ENCODE measurements at regions of chr17 and their contacts with region 1.

Region 1: DNA sequence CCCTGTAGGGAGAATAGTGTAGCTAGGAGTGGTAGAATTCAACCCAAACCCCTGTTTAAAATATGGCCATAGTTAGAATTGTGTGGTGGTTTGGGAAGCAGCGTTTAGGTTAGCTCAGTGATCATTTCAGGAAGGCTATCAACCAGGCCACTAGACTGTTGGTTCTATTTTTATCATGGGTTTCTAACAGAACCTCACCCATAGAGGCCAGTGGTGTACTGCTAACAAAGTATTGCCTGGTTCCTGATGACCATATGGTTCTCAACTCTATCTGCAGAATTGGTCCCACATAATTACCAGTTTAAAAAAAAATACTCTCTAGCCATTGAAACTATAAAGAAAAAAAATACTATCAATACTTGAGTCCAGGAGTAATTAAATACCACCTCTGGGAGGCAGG is 70.5 kb upstream of the RASL10B start:
- DNase-seq: peak in 1 of 2 donors; percentile 8
- ATAC-seq: peak in 7 of 8 donors; percentile 56 to 91 (median 88)
- H3K4me3 ChIP-seq: no peak overlapping the region
- H3K27ac ChIP-seq: no peak overlapping the region
- H3K4me1 ChIP-seq: peaks cover 0 to 5% (median 0%) of the 10 kb centered on the region in 9 donors
- H3K27me3 ChIP-seq: no peaks in the 10 kb centered on the region
- CTCF ChIP-seq: peak in 7 of 9 donors; percentile 19 to 53 (median 49)

Region 2: GRCh38 chr17:35596530-35597233 is 64.2 kb before region 1 on chr17:
- intact Hi-C with region 1: no loop called
- DNase-seq: no peak
- ATAC-seq: peak in 2 of 8 donors; percentile 42 to 71
- H3K4me3 ChIP-seq: no peak overlapping the region
- H3K27ac ChIP-seq: no peak overlapping the region
- H3K4me1 ChIP-seq: peaks cover 0 to 25% (median 7%) of the 10 kb centered on the region in 9 donors
- H3K27me3 ChIP-seq: no peaks in the 10 kb centered on the region
- CTCF ChIP-seq: peak in 1 of 9 donors; percentile 16

Region 3: DNA sequence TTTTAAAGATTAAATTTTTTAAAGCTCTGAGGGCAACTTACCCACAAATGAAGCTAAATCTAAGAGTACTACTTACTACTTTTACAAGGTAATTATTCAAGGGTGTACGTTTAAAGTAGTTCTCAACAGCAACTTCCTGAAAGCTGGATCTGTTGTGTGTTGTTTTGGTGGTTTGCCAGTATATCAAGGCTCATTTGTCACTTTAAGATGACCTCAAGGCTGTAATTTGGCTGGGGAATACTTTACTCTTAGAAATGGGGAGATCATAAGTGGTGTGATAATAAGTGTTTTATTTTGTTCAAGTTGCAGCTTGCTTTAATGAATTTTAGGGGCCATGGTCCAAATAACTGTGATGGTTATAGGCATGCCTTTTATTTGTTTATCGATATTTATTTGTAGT is 43.4 kb before region 1 on chr17:
- intact Hi-C with region 1: no loop called
- DNase-seq: no peak
- ATAC-seq: peak in 3 of 8 donors; percentile 17 to 48 (median 46)
- H3K4me3 ChIP-seq: no peak overlapping the region
- H3K27ac ChIP-seq: peak overlapping the region in 6 of 10 donors; percentile 6 to 62 (median 42)
- H3K4me1 ChIP-seq: peaks cover 0 to 41% (median 24%) of the 10 kb centered on the region in 9 donors
- H3K27me3 ChIP-seq: no peaks in the 10 kb centered on the region
- CTCF ChIP-seq: no peak

Region 4: GRCh38 chr17:35713069-35713728 is 52.3 kb after region 1 on chr17:
- intact Hi-C with region 1: no loop called
- DNase-seq: peak in 1 of 2 donors; percentile 51
- ATAC-seq: peak; percentile 89 to 95 (median 92)
- H3K4me3 ChIP-seq: peak overlapping the region in 2 of 10 donors; percentile 4 to 9
- H3K27ac ChIP-seq: peak overlapping the region; percentile 63 to 92 (median 79)
- H3K4me1 ChIP-seq: peaks cover 11 to 77% (median 52%) of the 10 kb centered on the region in 9 donors
- H3K27me3 ChIP-seq: no peaks in the 10 kb centered on the region
- CTCF ChIP-seq: no peak

Region 5: DNA sequence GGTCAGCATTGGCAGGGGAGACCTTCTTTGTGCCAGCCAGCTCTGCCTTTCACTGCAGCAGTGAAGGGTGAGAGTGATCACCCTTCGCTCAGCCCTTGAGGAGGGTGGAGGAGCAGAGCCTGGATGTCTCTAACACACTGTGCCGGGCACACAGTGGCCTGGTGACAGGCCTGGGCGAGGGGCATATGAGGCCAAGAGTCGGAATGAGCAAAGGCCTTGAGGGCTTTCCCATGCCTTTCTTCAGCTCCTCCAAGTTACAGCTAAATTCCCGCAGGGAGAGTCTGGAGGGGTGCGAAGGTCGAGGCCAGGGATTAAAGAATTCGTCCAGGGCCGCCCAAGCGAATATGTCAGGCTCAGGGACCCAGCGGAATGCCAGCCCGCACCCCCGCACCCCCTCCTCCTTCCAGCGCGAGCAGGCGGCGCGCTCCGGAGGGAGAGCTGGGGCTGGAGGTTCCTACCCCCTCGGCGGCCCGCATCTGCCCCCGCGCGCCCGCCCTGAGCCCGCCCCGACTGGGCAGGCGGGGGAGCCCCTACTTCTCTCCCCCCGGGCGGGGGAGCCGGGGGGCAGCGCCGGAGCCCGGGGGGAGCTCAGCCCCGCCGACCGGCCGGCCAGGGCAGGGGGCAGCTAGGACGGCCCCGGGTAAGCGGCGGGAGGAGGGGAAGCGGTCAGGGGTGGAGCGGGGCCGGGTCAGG is 70.5 kb after region 1 on chr17 and contains the start of gene RASL10B:
- intact Hi-C with region 1: loop called in 1 of 10 experiments (anchors 5 kb)
- DNase-seq: peak; percentile 48 to 65
- ATAC-seq: peak; percentile 78 to 87 (median 85)
- H3K4me3 ChIP-seq: peak within 1 kb of the TSS; percentile 22 to 77 (median 64)
- H3K27ac ChIP-seq: peak within 1 kb of the TSS in 6 of 10 donors; percentile 8 to 59 (median 26)
- H3K4me1 ChIP-seq: peaks cover 13 to 33% (median 20%) of the 10 kb centered on the region in 9 donors
- H3K27me3 ChIP-seq: peaks cover 0 to 15% (median 0%) of the 10 kb centered on the region in 7 donors
- CTCF ChIP-seq: no peak
- total RNA-seq, gene RASL10B: 9.0 to 26.2 (median 11.9) TPM